Activated CD4-positive, alpha-beta memory T cell treated with anti-CD3 and anti-CD28 coated beads, Interleukin-2, amount 10 ng/mL, durations not matched to agents 7 days and 5 days (primary cell): ENCODE measurements at regions of chr19 and their contacts with region 1.

Region 1: GRCh38 chr19:46661020-46661731 is at the start of gene DACT3:
- DNase-seq: peak; percentile 100
- H3K4me3 Mint-ChIP-seq: peak within 1 kb of the TSS; percentile 69
- H3K27ac Mint-ChIP-seq: peak within 1 kb of the TSS; percentile 71
- H3K4me1 Mint-ChIP-seq: peaks cover 19% of the 10 kb centered on the region
- H3K27me3 Mint-ChIP-seq: peaks cover 40% of the 10 kb centered on the region
- total RNA-seq, gene DACT3: 0.15 to 0.20 TPM

Region 2: GRCh38 chr19:46503848-46504453 is 157.2 kb before region 1 on chr19:
- CTCF ChIA-PET with region 1: no interaction called
- POLR2A ChIA-PET with region 1: no interaction called
- DNase-seq: no peak
- H3K4me3 Mint-ChIP-seq: no peak overlapping the region
- H3K27ac Mint-ChIP-seq: no peak overlapping the region
- H3K4me1 Mint-ChIP-seq: no peaks in the 10 kb centered on the region
- H3K27me3 Mint-ChIP-seq: peaks cover 32% of the 10 kb centered on the region

Region 3: DNA sequence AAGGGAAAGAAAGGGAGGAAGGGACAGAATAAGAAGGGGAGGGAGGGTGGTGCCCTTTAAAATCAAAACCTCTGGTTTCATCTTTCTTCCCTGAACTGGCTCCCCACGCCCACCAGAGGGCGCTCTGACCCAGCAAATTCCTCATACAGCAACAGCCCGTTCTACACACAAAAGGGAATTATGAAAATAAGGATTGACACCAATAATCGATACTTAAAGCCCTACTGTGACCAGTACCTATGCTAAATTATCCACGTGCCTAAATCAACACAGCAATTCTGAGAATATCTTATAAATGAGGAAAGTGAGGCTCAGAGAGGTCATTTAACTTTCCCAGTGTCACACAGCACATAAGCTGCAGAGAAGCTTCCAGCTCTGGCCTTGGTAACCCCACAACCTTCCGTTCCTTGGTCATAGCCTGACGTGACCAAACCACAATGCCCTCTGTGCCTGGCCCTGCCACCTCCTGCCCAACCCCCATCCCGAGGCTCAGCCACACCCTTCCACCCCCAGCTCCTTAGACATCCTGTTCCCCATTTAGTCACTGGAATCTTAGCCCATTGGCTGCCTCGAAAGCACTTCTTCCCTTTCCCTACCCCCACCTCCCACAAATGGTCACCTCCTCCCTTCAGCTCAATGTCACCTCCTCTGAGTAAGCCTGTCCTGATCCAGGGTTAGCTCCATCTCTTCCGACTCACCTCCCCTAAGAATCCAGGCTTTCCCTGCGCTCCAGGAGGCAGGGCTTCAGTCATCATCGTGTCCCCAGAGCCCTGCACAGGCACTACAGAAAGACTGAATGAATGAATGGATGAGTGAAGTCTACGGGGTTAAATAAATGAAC is 131.3 kb before region 1 on chr19:
- CTCF ChIA-PET with region 1: interaction called, 26 read pairs
- POLR2A ChIA-PET with region 1: interaction called, 3 read pairs
- DNase-seq: peak; percentile 75
- H3K4me3 Mint-ChIP-seq: no peak overlapping the region
- H3K27ac Mint-ChIP-seq: peak overlapping the region; percentile 8
- H3K4me1 Mint-ChIP-seq: peaks cover 17% of the 10 kb centered on the region
- H3K27me3 Mint-ChIP-seq: no peaks in the 10 kb centered on the region

Region 4: GRCh38 chr19:46551164-46551563 is 110.0 kb before region 1 on chr19:
- CTCF ChIA-PET with region 1: no interaction called
- POLR2A ChIA-PET with region 1: no interaction called
- DNase-seq: no peak
- H3K4me3 Mint-ChIP-seq: no peak overlapping the region
- H3K27ac Mint-ChIP-seq: no peak overlapping the region
- H3K4me1 Mint-ChIP-seq: peaks cover 3% of the 10 kb centered on the region
- H3K27me3 Mint-ChIP-seq: peaks cover 33% of the 10 kb centered on the region

Region 5: GRCh38 chr19:46600384-46601317 is 60.5 kb before region 1 on chr19:
- CTCF ChIA-PET with region 1: interaction called, 22 read pairs
- POLR2A ChIA-PET with region 1: interaction called, 23 read pairs
- DNase-seq: peak; percentile 97
- H3K4me3 Mint-ChIP-seq: peak overlapping the region; percentile 100
- H3K27ac Mint-ChIP-seq: peak overlapping the region; percentile 100
- H3K4me1 Mint-ChIP-seq: peaks cover 38% of the 10 kb centered on the region
- H3K27me3 Mint-ChIP-seq: peaks cover 12% of the 10 kb centered on the region

Region 6: DNA sequence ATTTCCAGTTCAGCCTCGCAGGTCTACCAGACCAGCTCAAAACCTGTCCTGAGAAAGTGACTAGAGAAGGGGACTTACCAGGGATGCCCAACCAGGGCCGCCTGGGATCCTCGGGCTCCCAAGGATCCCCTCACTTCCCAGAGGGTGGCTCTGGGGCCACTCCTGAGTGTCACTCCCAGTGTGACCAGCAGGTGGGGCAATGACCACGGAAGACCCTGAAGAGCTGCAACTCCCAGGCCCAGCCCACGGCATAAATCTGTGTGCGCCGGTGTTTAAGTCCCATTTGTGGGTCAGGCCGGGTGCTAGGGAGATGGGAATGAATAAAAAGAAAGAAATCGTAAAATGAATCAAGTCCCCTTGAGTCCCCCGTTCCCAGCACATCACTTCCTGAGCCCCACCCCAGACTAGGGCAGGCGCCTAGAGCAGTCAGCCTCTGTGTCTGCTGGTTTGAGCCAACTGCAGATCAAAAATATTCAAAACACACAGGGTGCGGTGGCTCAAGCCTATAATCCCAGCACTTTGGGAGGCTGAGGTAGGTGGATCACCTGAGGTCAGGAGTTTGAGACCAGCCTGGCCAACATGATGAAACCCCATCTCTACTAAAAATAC is 47.0 kb before region 1 on chr19:
- CTCF ChIA-PET with region 1: interaction called, 136 read pairs
- POLR2A ChIA-PET with region 1: interaction called, 34 read pairs
- DNase-seq: peak; percentile 81
- H3K4me3 Mint-ChIP-seq: no peak overlapping the region
- H3K27ac Mint-ChIP-seq: peak overlapping the region; percentile 66
- H3K4me1 Mint-ChIP-seq: peaks cover 74% of the 10 kb centered on the region
- H3K27me3 Mint-ChIP-seq: no peaks in the 10 kb centered on the region

Region 7: GRCh38 chr19:46634045-46634655 is 27.0 kb before region 1 on chr19:
- CTCF ChIA-PET with region 1: interaction called, 24 read pairs
- POLR2A ChIA-PET with region 1: interaction called, 6 read pairs
- DNase-seq: peak; percentile 96
- H3K4me3 Mint-ChIP-seq: peak overlapping the region; percentile 45
- H3K27ac Mint-ChIP-seq: no peak overlapping the region
- H3K4me1 Mint-ChIP-seq: peaks cover 19% of the 10 kb centered on the region
- H3K27me3 Mint-ChIP-seq: peaks cover 23% of the 10 kb centered on the region

Region 8: GRCh38 chr19:46674416-46675183 is 13.4 kb after region 1 on chr19:
- CTCF ChIA-PET with region 1: interaction called, 14 read pairs
- POLR2A ChIA-PET with region 1: interaction called, 7 read pairs
- DNase-seq: no peak
- H3K4me3 Mint-ChIP-seq: no peak overlapping the region
- H3K27ac Mint-ChIP-seq: no peak overlapping the region
- H3K4me1 Mint-ChIP-seq: peaks cover 14% of the 10 kb centered on the region
- H3K27me3 Mint-ChIP-seq: no peaks in the 10 kb centered on the region

Region 9: GRCh38 chr19:46698395-46699321 is 37.5 kb after region 1 on chr19:
- CTCF ChIA-PET with region 1: no interaction called
- POLR2A ChIA-PET with region 1: no interaction called
- DNase-seq: no peak
- H3K4me3 Mint-ChIP-seq: no peak overlapping the region
- H3K27ac Mint-ChIP-seq: no peak overlapping the region
- H3K4me1 Mint-ChIP-seq: peaks cover 5% of the 10 kb centered on the region
- H3K27me3 Mint-ChIP-seq: no peaks in the 10 kb centered on the region

Region 10: GRCh38 chr19:46736544-46737297 is 75.5 kb after region 1 on chr19:
- CTCF ChIA-PET with region 1: no interaction called
- POLR2A ChIA-PET with region 1: no interaction called
- DNase-seq: no peak
- H3K4me3 Mint-ChIP-seq: no peak overlapping the region
- H3K27ac Mint-ChIP-seq: no peak overlapping the region
- H3K4me1 Mint-ChIP-seq: peaks cover 19% of the 10 kb centered on the region
- H3K27me3 Mint-ChIP-seq: no peaks in the 10 kb centered on the region